ENCODE measurements at regions of chr6 and their contacts with region 1.

Region 1: GRCh38 chr6:136226027-136226673 is 24.0 kb downstream of the MTFR2 start:
- DNase-seq: peak; percentile 28 to 66 (median 46)
- H3K4me3 ChIP-seq: peak overlapping the region; percentile 22
- H3K4me3 Mint-ChIP-seq: peak overlapping the region in 6 of 7 donors; percentile 57 to 77 (median 66)
- H3K27ac ChIP-seq: peak overlapping the region; percentile 43
- H3K27ac Mint-ChIP-seq: peak overlapping the region in 4 of 8 donors; percentile 4 to 48 (median 30)
- H3K4me1 ChIP-seq: no peaks in the 10 kb centered on the region
- H3K4me1 Mint-ChIP-seq: peaks cover 8 to 10% (median 8%) of the 10 kb centered on the region in 3 donors
- H3K27me3 ChIP-seq: no peaks in the 10 kb centered on the region
- H3K27me3 Mint-ChIP-seq: peaks cover 0 to under 1% of the 10 kb centered on the region in 2 donors

Region 2: DNA sequence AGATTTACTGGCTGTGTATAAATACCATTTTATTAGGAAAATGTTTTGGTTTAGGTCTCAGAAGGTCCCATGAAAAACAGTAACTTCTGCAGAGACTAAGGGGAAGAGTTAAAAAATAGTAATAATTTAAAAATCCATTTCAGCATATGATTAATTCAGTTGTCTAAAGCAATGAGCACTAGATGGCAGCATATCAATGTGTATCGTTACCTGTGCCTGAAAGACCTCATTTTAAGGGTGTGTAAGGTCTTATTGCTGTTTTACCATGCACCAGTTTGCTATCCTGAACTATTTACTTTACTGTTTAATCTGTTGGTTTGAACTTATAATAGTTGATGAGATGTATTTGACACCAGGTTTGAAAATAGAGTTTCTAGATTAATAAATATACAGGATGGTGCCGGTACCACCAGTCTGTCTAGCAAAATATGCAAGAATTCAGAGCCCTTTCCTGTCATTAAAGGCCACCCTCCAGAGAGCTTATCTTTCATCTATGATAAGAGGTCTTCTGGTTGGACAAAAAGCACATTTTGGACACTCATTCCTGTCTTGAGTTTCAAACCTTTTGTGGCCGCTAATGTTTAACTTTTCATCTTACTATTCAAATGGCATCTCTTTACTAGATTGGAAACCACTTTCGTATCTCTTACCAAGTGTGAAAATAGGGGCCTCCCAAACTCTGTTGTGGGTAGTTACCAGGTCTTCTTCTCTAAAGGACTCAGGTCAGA is 719.7 kb before region 1 on chr6:
- CTCF ChIA-PET with region 1: interaction called, 16 read pairs
- POLR2A ChIA-PET with region 1: no interaction called
- DNase-seq: peak in 2 of 5 donors; percentile 28 to 37
- H3K4me3 ChIP-seq: no peak overlapping the region
- H3K4me3 Mint-ChIP-seq: peak overlapping the region in 4 of 7 donors; percentile 20 to 49 (median 32)
- H3K27ac ChIP-seq: no peak overlapping the region
- H3K27ac Mint-ChIP-seq: peak overlapping the region in 2 of 8 donors; percentile 14 to 61
- H3K4me1 ChIP-seq: no peaks in the 10 kb centered on the region
- H3K4me1 Mint-ChIP-seq: peaks cover 6 to 8% (median 8%) of the 10 kb centered on the region in 3 donors
- H3K27me3 ChIP-seq: no peaks in the 10 kb centered on the region
- H3K27me3 Mint-ChIP-seq: no peaks in the 10 kb centered on the region

Region 3: DNA sequence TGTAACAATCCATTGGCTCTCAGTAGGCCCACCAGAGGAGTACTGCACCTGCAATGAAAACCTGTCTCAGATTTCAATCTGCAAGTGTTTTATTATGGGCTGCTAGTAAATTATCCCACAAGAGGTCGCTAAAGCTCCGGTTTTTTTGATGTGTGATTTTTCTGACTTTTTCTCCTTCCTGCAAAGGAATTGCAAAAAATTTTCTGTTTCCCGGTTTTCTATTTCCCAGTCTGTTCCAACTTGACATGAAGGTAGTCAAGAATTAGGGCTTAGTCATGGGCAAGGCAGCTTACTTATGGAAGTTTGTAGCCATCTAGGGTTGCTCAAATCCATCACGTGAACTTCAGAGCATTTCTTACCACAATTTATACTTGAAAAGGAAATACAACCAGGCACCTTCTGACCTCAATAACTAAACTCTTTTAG is 690.1 kb before region 1 on chr6:
- CTCF ChIA-PET with region 1: interaction called, 17 read pairs
- POLR2A ChIA-PET with region 1: interaction called, 3 read pairs
- DNase-seq: peak in 2 of 5 donors; percentile 17 to 35
- H3K4me3 ChIP-seq: no peak overlapping the region
- H3K4me3 Mint-ChIP-seq: peak overlapping the region in 6 of 7 donors; percentile 2 to 72 (median 54)
- H3K27ac ChIP-seq: no peak overlapping the region
- H3K27ac Mint-ChIP-seq: peak overlapping the region in 3 of 8 donors; percentile 41 to 79 (median 72)
- H3K4me1 ChIP-seq: peaks cover 6% of the 10 kb centered on the region
- H3K4me1 Mint-ChIP-seq: peaks cover 13 to 25% (median 19%) of the 10 kb centered on the region in 3 donors
- H3K27me3 ChIP-seq: no peaks in the 10 kb centered on the region
- H3K27me3 Mint-ChIP-seq: peaks cover 4 to 12% of the 10 kb centered on the region in 2 donors

Region 4: DNA sequence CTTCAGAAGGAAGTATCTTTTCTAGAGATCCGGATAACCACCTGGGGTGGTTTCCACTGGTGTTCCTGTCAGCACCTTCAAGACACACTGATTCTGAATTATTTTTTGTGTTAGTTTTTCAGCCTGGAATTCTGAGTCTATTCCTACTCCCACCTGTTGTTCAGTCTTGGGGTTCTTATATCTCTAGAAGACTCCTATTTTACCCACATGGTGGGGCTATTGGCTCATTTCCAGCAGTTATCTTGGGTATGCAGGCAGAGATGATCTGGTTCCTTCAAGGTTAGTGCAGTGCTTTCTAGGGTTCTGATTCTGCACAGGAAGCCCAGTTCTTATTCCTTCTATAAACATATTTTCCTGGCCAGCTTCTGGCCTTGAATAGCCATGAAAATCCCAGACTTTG is 550.3 kb before region 1 on chr6:
- CTCF ChIA-PET with region 1: interaction called, 14 read pairs
- POLR2A ChIA-PET with region 1: no interaction called
- DNase-seq: peak in 2 of 5 donors; percentile 30 to 54
- H3K4me3 ChIP-seq: no peak overlapping the region
- H3K4me3 Mint-ChIP-seq: no peak overlapping the region
- H3K27ac ChIP-seq: no peak overlapping the region
- H3K27ac Mint-ChIP-seq: no peak overlapping the region
- H3K4me1 ChIP-seq: no peaks in the 10 kb centered on the region
- H3K4me1 Mint-ChIP-seq: no peaks in the 10 kb centered on the region
- H3K27me3 ChIP-seq: no peaks in the 10 kb centered on the region
- H3K27me3 Mint-ChIP-seq: no peaks in the 10 kb centered on the region

Region 5: DNA sequence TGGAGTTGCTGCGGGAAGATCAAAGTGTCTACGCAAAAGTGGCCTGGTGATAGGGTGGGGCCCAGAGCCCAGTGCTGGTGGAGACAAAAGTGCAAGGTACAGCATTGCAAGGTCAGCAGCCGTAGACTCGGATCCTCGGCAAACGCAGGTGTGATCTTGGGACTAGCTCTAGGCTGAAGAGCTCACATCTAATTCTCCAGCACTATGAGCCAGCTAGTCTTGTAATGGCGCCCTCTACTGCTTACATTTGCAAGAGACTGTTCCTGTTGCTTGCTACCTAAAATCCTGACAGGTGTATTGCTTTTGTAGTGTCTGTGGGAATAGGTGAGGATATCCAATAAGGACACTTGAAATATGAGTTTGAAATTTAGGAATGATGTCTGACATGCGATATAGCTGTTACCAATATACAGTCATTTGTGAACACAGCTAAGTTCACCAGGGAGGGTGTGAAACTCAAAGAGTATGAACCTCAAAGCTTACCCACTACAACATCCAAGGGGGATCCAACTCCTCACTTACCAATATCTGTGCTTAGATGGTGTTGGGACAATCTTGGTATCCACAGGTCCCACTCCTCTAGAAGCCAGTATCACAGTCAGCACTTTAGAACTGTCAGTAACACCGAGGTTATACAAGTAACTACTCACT is 316.3 kb before region 1 on chr6:
- CTCF ChIA-PET with region 1: interaction called, 12 read pairs
- POLR2A ChIA-PET with region 1: no interaction called
- DNase-seq: peak; percentile 11 to 72 (median 52)
- H3K4me3 ChIP-seq: no peak overlapping the region
- H3K4me3 Mint-ChIP-seq: no peak overlapping the region
- H3K27ac ChIP-seq: no peak overlapping the region
- H3K27ac Mint-ChIP-seq: peak overlapping the region in 1 of 8 donors; percentile 14
- H3K4me1 ChIP-seq: no peaks in the 10 kb centered on the region
- H3K4me1 Mint-ChIP-seq: peaks cover 3 to 5% (median 4%) of the 10 kb centered on the region in 3 donors
- H3K27me3 ChIP-seq: no peaks in the 10 kb centered on the region
- H3K27me3 Mint-ChIP-seq: no peaks in the 10 kb centered on the region

Region 6: DNA sequence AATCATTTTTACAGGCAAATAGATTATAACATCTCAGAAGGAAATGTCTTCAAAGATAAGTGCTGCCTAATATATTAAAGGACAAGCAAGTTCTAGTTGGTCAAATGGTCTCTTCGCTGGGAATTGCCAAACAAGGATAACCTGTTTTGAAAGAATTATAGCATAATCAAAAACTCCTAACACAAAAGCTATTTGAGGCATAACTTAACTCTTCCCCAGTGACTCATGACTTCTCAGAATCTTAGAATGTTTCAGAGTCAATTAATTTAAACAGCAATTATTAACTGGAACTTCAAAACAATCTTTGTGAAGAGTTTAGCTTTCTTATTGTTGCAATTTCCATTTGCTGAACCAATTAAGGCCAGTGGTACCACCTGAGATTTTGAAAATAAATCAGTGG is 102.7 kb before region 1 on chr6:
- CTCF ChIA-PET with region 1: no interaction called
- POLR2A ChIA-PET with region 1: no interaction called
- DNase-seq: no peak
- H3K4me3 ChIP-seq: no peak overlapping the region
- H3K4me3 Mint-ChIP-seq: no peak overlapping the region
- H3K27ac ChIP-seq: no peak overlapping the region
- H3K27ac Mint-ChIP-seq: no peak overlapping the region
- H3K4me1 ChIP-seq: no peaks in the 10 kb centered on the region
- H3K4me1 Mint-ChIP-seq: no peaks in the 10 kb centered on the region
- H3K27me3 ChIP-seq: no peaks in the 10 kb centered on the region
- H3K27me3 Mint-ChIP-seq: peaks cover 3 to 11% of the 10 kb centered on the region in 2 donors

Region 7: DNA sequence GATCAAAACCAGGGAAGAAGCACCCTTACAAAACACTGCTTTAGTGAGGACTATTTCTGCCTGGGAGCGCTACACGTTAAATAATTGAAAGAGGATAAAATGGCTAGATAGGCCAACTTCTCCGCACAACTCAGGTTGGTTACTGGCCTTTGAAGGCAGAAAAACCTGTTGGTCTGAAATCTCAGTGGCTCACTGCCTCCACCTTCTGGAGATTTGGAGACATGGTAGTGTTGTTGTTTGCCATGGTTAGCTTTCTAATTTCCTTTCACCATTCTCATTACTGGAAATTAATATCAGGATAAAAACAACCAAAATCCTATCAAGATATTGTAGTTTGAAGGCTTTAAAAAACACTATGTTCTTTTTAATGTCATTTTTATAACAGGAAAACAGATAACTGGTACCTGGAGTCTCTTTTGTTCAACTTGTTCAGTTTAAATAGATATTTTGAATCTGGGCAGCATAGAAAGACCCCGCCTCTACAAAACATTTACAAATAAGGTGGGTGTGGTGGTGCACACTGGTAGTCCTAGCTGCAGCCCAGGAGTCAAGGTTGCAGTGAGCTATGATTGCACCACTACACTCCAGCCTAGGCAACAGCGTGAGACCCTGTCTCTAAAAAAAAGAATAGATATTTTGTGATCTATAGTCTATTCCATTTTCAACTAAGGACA is 91.0 kb after region 1 on chr6:
- CTCF ChIA-PET with region 1: interaction called, 16 read pairs
- POLR2A ChIA-PET with region 1: no interaction called
- DNase-seq: peak; percentile 24 to 76 (median 59)
- H3K4me3 ChIP-seq: no peak overlapping the region
- H3K4me3 Mint-ChIP-seq: no peak overlapping the region
- H3K27ac ChIP-seq: no peak overlapping the region
- H3K27ac Mint-ChIP-seq: no peak overlapping the region
- H3K4me1 ChIP-seq: no peaks in the 10 kb centered on the region
- H3K4me1 Mint-ChIP-seq: no peaks in the 10 kb centered on the region
- H3K27me3 ChIP-seq: peaks cover 4% of the 10 kb centered on the region
- H3K27me3 Mint-ChIP-seq: peaks cover 5 to 7% of the 10 kb centered on the region in 2 donors